Tibial artery (tissue), 4 donors: ENCODE measurements at regions of chr1 and their contacts with region 1.

Region 1: DNA sequence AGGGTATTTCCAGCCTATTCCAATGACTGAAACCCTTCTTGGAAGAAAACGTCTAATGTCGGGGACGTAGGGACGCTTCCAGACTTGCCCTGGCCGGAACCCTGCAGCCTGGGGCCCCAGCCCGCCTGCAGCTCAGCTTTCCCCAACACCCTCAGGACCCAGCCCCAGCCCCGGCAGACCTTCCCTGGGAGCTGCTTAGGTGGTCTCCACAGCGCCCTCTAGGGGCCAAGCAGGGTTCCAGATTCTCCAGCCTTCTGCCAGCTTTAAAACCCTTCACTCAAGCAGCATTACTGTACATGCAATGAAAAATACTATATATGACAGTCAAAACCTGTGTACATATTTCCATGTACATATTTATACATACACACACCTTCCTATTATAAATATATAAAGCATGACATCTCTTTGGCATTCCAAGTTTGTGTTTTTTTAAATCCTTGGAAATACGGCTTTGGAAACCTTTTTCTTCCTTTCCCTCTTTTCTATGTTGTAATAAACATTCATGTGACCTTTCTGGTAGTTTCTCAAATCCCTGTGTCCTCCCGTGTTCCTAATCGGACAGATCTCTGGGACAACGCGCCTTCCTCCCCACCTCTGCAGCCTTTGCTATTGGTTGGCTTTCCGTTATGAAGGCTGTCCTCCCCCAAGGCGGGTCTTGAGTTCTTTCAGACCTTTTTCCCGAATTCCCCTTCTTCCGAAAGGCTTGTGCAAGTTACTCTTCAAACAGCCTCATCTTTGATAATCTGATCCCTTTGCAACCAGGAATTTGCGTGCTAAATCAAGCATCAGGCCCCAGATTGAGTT is 60.3 kb downstream of the STUM start:
- DNase-seq: peak; percentile 66 to 71
- H3K4me3 ChIP-seq: no peak overlapping the region
- H3K27ac ChIP-seq: no peak overlapping the region
- H3K4me1 ChIP-seq: peaks cover 0 to 23% (median 14%) of the 10 kb centered on the region in 4 donors
- H3K27me3 ChIP-seq: peaks cover 0 to 2% of the 10 kb centered on the region in 2 donors
- CTCF ChIP-seq: peak; percentile 65 to 87

Region 2: GRCh38 chr1:226411619-226412018 is 197.3 kb before region 1 on chr1:
- intact Hi-C with region 1: loop called (anchors 10 kb)
- DNase-seq: peak in 1 of 2 donors; percentile 74
- H3K4me3 ChIP-seq: no peak overlapping the region
- H3K27ac ChIP-seq: no peak overlapping the region
- H3K4me1 ChIP-seq: peaks cover 0 to 10% (median 5%) of the 10 kb centered on the region in 4 donors
- H3K27me3 ChIP-seq: no peaks in the 10 kb centered on the region
- CTCF ChIP-seq: no peak

Region 3: GRCh38 chr1:226547754-226548191 is 61.1 kb before region 1 on chr1:
- intact Hi-C with region 1: loop called (anchors 2 kb)
- DNase-seq: peak; percentile 88 to 90
- H3K4me3 ChIP-seq: peak overlapping the region; percentile 57 to 69
- H3K27ac ChIP-seq: peak overlapping the region in 1 of 2 donors; percentile 76
- H3K4me1 ChIP-seq: peaks cover 0 to 36% (median 31%) of the 10 kb centered on the region in 4 donors
- H3K27me3 ChIP-seq: no peaks in the 10 kb centered on the region
- CTCF ChIP-seq: peak; percentile 94

Region 4: GRCh38 chr1:226763905-226764264 is 155.0 kb after region 1 on chr1:
- intact Hi-C with region 1: no loop called
- DNase-seq: no peak
- H3K4me3 ChIP-seq: no peak overlapping the region
- H3K27ac ChIP-seq: no peak overlapping the region
- H3K4me1 ChIP-seq: no peaks in the 10 kb centered on the region
- H3K27me3 ChIP-seq: peaks cover 0 to 17% of the 10 kb centered on the region in 2 donors
- CTCF ChIP-seq: no peak